Activated T-helper 2 cell treated with anti-CD3 and anti-CD28 coated beads, Interferon-gamma antibody, Interleukin-2, Interleukin-4, amounts not matched to agents 10 μg/mL and 5 μg/mL and 100 μg/mL, durations not matched to agents 14 hours and 24 hours and 36 hours (primary cell): ENCODE measurements at regions of chr15 and their contacts with region 1.

Region 1: DNA sequence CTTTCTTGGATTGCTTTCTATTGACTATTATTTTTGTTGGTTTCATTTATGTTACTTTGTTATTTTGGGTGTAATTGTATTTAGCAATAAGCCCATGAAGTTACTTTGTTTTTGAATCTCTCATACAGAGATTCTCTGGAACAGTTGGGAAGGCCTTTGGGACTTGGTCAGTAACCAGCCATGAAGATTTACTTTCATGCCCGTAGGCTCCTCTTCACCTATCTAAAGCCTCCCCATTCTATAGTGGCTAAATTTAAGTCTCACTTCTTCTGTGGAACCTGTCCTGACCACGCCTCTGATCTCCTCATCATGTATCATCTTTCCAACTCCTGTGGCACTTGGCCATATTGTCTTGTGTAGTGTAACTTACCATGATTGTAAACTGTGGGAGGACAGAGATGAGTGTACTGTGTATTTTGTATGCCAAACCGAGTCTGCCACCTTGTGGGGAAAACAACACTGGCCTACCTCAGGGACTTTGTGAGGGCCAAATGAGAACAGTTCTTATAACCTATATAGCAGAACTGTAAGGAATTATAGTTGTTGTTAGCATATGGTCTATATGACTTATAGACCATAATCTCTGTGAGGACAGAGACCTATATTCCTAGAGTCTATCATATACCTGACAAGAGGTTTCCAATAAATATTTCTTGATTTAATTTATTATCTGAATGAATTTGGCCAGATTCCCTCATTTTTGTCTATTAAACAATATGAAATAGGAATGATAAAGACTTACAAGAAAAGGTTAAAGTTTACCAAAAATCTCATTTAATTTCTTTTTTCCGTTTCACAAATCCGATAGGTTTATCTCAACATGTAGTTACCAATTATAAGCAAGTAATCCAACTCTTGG is 75.0 kb downstream of the STARD9 start:
- DNase-seq: peak; percentile 60
- H3K4me3 Mint-ChIP-seq: no peak overlapping the region
- H3K27ac Mint-ChIP-seq: peak overlapping the region; percentile 48
- H3K4me1 Mint-ChIP-seq: peaks cover 14% of the 10 kb centered on the region
- H3K27me3 Mint-ChIP-seq: no peaks in the 10 kb centered on the region

Region 2: DNA sequence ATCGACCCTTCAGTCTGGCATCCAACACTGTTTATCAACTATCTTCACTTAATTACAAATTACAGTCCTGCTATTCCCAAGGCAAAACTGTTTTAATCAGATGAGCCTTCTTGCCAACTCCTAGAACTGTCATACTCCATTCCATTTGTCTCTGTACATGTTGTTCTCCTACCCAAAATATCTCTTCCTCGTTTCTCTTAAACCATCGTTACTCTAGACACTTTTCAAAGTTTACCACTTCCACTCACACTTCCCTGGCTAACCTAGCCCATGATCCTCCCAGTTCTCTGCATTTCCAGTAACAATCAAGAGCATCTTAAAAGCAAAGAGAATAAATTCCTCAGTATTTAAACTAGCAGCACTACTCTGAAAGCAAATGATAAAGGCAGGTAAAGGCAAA is 179.4 kb before region 1 on chr15:
- intact Hi-C with region 1: loop called (anchors 2 kb)
- DNase-seq: no peak
- H3K4me3 Mint-ChIP-seq: no peak overlapping the region
- H3K27ac Mint-ChIP-seq: no peak overlapping the region
- H3K4me1 Mint-ChIP-seq: peaks cover 6% of the 10 kb centered on the region
- H3K27me3 Mint-ChIP-seq: no peaks in the 10 kb centered on the region

Region 3: DNA sequence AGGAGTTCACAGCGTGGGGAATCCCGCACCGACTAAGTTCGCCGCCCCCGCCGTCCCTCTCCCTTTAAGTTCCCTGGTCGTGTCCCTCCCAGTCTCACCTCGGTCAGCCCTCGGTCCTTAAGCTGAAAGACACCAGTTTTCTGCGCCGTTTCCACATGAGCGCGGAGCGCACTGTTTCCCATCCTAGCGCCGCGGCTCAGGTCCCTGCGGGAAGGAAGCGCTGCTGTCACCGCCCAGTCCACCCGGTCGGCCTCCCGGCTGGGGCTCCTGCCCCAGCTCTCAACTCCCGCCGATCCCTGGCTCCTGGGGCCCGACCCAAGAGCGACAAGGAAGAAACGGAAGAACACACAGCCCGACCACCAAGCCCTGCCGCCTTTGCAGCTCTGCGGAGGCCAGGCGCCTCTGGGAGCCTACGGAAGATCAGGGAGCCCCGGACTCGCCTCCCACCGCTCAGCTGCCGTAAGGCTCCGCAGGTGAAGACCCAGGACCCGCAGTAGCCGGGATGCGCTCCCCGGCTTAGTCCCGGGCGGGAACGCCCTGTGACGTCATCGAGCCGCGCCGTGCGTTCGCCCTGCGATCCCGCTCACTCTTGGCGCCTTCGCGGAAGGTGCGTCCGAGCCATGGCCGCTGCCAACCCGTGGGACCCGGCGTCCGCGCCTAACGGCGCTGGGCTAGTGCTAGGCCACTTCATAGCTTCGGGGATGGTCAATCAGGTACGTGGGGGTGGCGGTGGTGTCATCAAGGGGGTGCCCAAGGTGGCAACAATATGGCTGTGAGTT is 102.0 kb before region 1 on chr15 and contains the starts of genes HAUS2 and LRRC57:
- intact Hi-C with region 1: loop called (anchors 1 kb)
- DNase-seq: peak; percentile 84
- H3K4me3 Mint-ChIP-seq: peak within 1 kb of the TSS; percentile 92
- H3K27ac Mint-ChIP-seq: peak within 1 kb of the TSS; percentile 92
- H3K4me1 Mint-ChIP-seq: peaks cover 36% of the 10 kb centered on the region
- H3K27me3 Mint-ChIP-seq: no peaks in the 10 kb centered on the region
- total RNA-seq, gene HAUS2: 42.9 and 45.5 TPM in 2 replicates
- total RNA-seq, gene LRRC57: 21.0 and 22.5 TPM in 2 replicates

Region 4: DNA sequence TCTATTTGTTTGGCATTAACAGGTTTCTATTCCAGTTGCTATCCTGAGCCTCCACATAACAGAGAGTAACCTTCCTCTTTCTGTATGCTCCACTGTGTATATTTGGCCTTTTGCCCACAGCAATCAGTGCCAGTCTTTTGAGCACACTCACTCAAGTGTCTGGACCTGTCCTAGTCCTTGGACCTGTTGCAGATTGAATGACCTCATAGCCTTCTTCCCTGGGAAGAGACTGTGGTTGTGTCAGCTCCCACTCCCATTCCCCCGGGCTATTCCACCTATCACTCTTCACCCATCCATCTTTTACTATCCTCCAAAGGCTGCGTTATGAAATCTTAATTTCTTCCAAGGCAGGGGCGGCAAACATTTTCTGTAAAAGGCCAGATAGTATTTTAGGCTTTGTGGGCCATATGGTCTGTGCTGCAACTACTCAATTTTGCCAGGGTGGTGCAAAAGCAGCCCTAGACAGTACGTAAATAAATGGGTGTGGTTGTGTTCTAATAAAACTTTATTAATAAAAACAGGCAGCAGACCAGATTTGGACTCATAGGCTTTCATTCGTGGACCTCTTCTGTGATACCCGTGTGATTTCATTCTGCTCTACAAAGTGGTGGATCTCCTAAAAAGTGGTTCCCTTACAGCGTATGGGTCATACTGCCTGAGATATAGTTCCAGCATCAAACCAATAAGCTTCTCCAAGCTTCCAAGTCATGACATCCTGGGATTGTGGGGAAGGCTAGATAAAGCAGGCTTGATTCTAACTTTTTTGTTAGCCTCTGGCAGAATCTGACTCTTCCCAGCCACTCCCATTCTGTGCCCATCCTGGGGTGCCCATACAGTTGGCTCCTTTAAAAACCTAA is 29.1 kb after region 1 on chr15:
- intact Hi-C with region 1: loop called (anchors 1 kb)
- DNase-seq: no peak
- H3K4me3 Mint-ChIP-seq: no peak overlapping the region
- H3K27ac Mint-ChIP-seq: no peak overlapping the region
- H3K4me1 Mint-ChIP-seq: peaks cover 28% of the 10 kb centered on the region
- H3K27me3 Mint-ChIP-seq: no peaks in the 10 kb centered on the region

Region 5: GRCh38 chr15:42796955-42797779 is 146.7 kb after region 1 on chr15:
- intact Hi-C with region 1: no loop called
- DNase-seq: no peak
- H3K4me3 Mint-ChIP-seq: no peak overlapping the region
- H3K27ac Mint-ChIP-seq: no peak overlapping the region
- H3K4me1 Mint-ChIP-seq: peaks cover 15% of the 10 kb centered on the region
- H3K27me3 Mint-ChIP-seq: no peaks in the 10 kb centered on the region